ENCODE measurements at regions of chr17 and their contacts with region 1.

Region 1: GRCh38 chr17:75430159-75430974 is 24.9 kb upstream of the GRB2 start:
- DNase-seq: no peak
- ATAC-seq: no peak

Region 2: GRCh38 chr17:75515496-75516254 is 85.3 kb after region 1 on chr17 and contains the start of gene CASKIN2:
- intact Hi-C with region 1: loop called (anchors 2 kb)
- DNase-seq: peak; percentile 97
- ATAC-seq: peak; percentile 94
- total RNA-seq, gene CASKIN2: 33.3 TPM

Region 3: DNA sequence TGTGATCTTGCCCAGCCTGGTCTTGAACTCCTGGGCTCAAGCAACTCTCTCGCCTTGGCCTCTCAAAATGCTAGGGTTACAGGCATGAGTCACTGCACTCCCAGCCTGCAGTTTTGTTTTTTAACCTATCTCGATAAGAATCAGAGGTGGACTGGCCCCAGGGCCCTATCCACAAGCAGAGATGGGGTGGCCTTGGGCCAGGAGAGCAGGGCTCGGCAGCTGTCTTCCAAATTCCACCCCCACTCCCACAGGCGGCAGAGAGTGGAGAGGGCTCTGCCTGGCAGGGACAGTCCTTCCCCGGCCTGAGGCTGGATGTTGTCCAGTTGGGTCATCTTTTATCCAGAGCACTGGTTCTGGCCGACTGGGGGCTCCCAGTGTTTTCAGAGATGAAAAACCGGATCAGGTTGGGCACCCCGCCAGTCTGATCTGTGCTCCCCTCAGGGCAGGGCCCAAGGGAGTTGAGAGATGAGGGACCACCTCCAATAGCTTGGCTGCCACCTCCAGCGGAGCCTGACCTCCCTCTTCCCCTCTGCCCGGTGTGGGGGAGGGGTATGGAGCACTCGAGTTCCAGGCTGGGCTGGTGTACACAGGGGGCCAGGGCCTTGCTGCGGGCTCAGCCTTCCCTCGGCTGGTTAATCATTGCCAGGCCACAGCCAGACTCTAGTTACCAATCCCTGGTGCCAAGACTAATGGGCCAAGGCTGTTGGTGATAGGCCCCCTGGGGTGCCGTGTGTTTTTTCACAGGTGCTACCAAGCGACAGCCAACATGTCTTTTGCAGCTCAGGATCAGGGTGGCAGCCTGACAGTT is 126.9 kb after region 1 on chr17:
- intact Hi-C with region 1: no loop called
- DNase-seq: no peak
- ATAC-seq: peak; percentile 53

Region 4: GRCh38 chr17:75589012-75589918 is 158.9 kb after region 1 on chr17:
- intact Hi-C with region 1: loop called (anchors 10 kb)
- DNase-seq: peak; percentile 98
- ATAC-seq: peak; percentile 93